Calu3 (cell line): ENCODE measurements at regions of chr1 and their contacts with region 1.

Region 1: GRCh38 chr1:201408176-201408833 is 9.2 kb upstream of the LAD1 start:
- DNase-seq: peak; percentile 95
- H3K4me3 Mint-ChIP-seq: no peak overlapping the region
- H3K27ac Mint-ChIP-seq: no peak overlapping the region
- H3K4me1 Mint-ChIP-seq: no peaks in the 10 kb centered on the region
- H3K27me3 Mint-ChIP-seq: peaks cover 10% of the 10 kb centered on the region
- CTCF ChIP-seq: peak; percentile 98

Region 2: DNA sequence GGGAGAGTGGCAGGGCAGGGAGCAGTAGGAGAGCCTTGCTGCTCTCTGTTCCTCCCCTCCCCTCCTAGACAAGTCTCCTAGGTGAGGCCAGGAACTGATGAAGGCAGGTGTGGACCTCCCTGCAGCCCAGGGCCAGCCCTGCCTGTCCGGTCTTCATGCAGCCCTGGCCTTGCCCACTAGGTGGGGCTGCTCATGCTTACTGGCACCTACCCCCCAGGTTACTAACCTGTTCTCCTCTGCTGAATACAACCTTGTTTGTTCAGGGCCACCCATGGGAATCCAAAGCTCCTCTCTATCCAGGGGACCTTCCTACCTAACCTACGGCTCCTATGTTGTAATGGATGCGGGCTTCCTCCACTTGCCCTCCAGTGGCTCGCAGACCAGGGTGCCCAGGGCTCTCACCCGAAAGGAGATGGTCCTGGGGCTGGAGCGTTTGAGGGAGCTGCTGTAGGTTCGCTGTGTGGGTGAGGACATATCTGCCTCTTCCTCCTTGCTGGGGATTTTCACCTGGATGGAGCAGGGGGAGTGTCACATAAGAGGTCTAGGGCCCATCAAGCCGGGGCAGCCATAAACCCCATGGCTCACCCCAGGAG is 22.9 kb before region 1 on chr1:
- CTCF ChIA-PET with region 1: interaction called, 14 read pairs
- intact Hi-C with region 1: loop called (anchors 2 kb)
- DNase-seq: peak; percentile 93
- H3K4me3 Mint-ChIP-seq: no peak overlapping the region
- H3K27ac Mint-ChIP-seq: peak overlapping the region; percentile 33
- H3K4me1 Mint-ChIP-seq: peaks cover 18% of the 10 kb centered on the region
- H3K27me3 Mint-ChIP-seq: no peaks in the 10 kb centered on the region
- CTCF ChIP-seq: peak; percentile 93

Region 3: DNA sequence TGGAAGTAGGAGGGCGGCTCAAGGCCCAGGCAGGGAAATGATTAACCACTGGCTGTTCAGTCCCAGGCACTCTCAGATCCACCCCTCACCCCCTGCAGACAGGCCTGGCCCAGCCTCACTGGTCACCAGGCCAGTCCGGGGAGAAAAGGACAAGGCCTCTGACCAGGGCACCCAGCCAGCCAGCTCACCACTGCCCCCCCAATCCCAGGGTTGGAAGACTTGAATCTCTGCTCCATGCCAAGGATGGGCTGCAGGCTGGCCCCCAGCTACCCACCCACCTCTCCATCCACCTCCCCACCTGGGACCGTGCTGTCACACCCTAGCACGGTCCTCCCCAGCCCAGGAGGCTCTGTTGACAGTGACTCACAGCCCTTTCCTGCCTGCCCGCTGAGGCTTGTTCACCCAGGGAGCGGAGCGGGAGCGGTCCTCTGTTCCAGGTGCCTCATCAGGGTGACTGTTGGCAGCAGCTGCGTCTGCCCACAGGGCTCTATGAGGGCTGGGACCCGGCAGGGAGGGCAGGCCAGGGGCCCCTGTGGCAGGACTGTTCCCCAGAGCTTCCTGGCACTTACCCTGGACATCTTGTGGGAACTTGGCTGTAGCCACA is 11.3 kb before region 1 on chr1:
- CTCF ChIA-PET with region 1: interaction called, 6 read pairs
- intact Hi-C with region 1: loop called (anchors 1 kb)
- DNase-seq: peak; percentile 91
- H3K4me3 Mint-ChIP-seq: peak overlapping the region; percentile 87
- H3K27ac Mint-ChIP-seq: peak overlapping the region; percentile 84
- H3K4me1 Mint-ChIP-seq: peaks cover 60% of the 10 kb centered on the region
- H3K27me3 Mint-ChIP-seq: no peaks in the 10 kb centered on the region
- CTCF ChIP-seq: no peak

Region 4: DNA sequence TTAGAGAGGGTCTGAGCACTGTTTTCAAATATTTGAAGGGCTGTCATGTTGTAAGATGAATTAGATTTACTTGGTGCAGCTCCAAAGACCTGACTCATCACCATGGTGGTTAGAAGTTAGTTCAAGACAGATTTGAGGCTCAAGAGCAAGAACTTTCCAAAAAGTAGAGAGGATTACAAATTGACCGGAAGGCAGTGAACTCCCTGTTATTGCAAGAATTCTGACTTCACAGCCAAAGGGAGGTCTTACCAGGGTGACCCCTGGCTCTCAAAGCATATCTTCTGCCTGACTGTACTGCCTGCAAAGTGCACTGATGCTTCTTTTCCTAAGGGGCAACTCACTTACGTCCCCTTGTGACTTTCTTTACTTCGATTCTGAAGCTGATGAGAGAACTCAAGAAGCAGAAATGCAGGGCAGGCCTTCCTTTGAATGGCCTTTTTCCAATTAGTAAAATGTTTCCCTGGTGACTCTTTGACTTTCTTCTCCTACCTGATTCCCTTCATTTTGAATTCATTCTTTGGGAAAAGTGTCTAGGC is 217.0 kb after region 1 on chr1:
- CTCF ChIA-PET with region 1: no interaction called
- intact Hi-C with region 1: no loop called
- DNase-seq: no peak
- H3K4me3 Mint-ChIP-seq: no peak overlapping the region
- H3K27ac Mint-ChIP-seq: no peak overlapping the region
- H3K4me1 Mint-ChIP-seq: no peaks in the 10 kb centered on the region
- H3K27me3 Mint-ChIP-seq: no peaks in the 10 kb centered on the region
- CTCF ChIP-seq: no peak